AG04449 (cell line): ENCODE measurements at regions of chr15 and their contacts with region 1.

Region 1: GRCh38 chr15:100918034-100918689 is 995 bp upstream of the LRRK1 start:
- DNase-seq: no peak
- H3K4me3 ChIP-seq: peak overlapping the region; percentile 69
- CTCF ChIP-seq: peak; percentile 96

Region 2: DNA sequence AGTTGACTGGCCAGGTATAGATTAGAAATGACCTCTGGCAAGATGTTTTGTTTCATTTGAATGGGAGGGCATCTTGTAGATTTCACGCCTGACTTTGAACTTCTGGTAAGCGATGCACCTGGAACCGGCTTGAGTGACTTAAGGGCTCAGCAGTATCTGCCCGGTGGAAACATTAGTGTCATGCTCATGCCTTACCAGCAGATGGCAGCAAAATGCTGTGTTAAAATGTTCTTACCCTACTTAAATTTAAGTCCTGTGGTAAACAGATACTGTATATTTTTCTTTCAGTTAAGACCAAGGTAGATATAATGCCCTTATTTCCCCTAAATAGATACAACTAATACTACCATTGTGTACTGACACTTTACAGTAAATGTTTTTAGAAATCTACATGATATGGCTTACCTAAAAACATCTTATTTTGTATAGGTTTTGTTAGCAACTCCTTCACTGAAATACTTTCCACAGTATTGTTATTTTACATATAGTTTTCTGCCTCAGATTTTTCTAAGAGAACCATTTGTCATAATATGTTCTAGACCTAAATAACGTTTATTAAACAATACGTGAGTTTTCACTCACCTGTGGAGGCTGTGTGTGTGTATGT is 290.3 kb before region 1 on chr15:
- CTCF ChIA-PET with region 1: interaction called, 19 read pairs
- POLR2A ChIA-PET with region 1: no interaction called
- DNase-seq: peak; percentile 52
- H3K4me3 ChIP-seq: no peak overlapping the region
- CTCF ChIP-seq: peak; percentile 58

Region 3: DNA sequence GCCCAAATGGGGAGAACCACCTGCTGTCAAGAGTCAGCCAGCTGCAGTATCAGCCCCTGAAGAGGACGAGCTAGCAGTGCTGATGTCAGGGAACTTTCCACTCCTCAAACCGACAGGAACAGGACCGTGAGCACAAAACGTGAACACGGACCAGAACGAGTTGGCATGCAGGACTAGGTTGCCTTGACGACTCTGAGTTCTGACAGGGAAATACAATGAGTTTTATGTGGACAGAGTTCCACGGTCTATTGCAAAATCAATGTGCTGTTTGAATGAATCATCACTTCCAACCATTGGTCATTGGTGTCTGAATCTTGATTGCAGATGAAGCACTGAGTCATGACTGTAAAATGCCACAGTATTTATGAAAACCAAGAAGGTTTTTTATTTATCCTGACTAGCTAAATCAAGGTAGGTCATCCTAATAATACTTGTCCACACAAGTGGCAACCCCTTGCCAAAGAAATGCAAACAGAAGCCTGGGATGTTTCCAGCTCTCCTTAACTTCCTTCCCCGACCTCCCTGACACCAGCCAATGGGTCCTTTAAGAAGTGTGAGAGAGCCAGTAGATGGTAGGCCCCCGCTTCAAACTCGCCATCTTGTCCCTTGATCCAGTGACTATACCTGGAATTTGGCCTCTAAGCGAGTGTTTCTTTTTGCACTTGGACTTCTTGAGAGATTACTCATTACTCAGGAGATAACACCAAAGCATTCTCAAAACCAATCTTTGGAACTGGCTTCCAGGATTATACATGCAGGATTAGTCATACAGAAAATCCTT is 196.2 kb before region 1 on chr15:
- CTCF ChIA-PET with region 1: no interaction called
- POLR2A ChIA-PET with region 1: no interaction called
- DNase-seq: peak; percentile 97
- H3K4me3 ChIP-seq: peak overlapping the region; percentile 36
- CTCF ChIP-seq: no peak

Region 4: GRCh38 chr15:100873029-100873677 is 45.0 kb before region 1 on chr15:
- CTCF ChIA-PET with region 1: interaction called, 15 read pairs
- POLR2A ChIA-PET with region 1: no interaction called
- DNase-seq: peak; percentile 73
- H3K4me3 ChIP-seq: no peak overlapping the region
- CTCF ChIP-seq: peak; percentile 78

Region 5: GRCh38 chr15:100889385-100890050 is 28.6 kb before region 1 on chr15:
- CTCF ChIA-PET with region 1: interaction called, 12 read pairs
- POLR2A ChIA-PET with region 1: no interaction called
- DNase-seq: peak; percentile 52
- H3K4me3 ChIP-seq: peak overlapping the region; percentile 6
- CTCF ChIP-seq: no peak

Region 6: DNA sequence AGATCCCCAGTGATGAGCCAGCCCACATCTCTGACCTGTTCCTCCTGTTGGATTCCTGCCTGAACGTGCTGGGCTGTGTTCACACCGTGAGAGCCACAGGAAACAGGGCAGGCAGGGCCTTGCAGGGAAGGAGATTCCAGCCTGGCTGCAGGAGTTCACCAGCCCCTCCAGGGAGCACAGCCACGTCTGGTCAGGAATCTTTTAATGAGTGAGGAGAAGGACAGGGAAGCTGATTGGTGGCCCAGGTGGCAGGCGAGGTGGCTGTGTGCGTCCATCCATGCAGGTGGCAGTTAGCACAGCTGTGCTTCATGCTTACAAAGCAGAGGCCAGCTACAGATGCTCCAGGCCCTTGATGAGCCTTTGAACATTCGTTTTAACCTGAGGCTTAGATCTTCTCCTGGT is 11.5 kb after region 1 on chr15:
- CTCF ChIA-PET with region 1: interaction called, 76 read pairs
- POLR2A ChIA-PET with region 1: no interaction called
- DNase-seq: no peak
- H3K4me3 ChIP-seq: no peak overlapping the region
- CTCF ChIP-seq: no peak

Region 7: DNA sequence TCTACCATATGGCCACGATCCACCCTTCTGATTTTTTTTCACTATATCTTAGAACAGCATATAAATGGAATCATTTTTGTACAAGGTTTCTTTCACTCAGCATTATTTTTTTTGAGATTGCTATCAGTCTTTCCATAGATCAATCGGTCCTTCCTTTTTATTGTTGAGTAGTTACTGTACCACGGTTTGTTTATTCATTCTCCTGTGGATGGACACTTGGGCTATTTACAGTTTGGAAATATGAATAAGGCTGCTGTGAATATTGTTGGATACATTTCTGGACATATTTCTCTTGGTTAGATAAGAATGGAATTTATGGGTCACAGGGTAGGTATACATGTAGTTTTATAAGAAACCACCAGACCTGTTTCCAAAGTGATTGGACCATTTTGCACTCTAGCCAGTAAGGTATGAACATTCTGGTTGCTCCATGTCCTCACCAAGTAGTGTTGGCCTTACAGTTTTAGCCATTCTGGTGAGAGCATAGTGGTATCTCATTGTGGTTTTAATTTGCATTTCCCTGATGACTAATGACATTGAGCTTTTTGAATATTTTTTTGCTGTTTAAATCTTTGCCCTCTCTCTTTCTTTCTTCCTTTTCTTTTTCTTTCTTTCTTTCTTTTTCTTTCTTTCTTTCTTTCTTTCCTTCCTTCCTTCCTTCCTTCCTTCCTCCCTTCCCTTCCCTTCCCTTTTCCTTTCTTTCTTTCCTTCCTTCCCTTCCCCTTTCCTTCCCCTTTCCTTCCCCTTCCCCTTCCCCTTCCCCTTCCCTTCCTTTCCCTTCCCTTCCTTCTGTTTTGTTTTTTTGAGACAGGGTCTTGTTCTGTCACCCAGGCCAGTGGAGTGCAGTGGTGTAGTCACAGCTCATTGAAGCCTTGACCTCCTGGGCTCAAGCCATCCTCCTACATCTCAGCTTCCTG is 50.1 kb after region 1 on chr15:
- CTCF ChIA-PET with region 1: interaction called, 10 read pairs
- POLR2A ChIA-PET with region 1: no interaction called
- DNase-seq: no peak
- H3K4me3 ChIP-seq: no peak overlapping the region
- CTCF ChIP-seq: no peak

Region 8: GRCh38 chr15:101042320-101042719 is 124.2 kb after region 1 on chr15:
- CTCF ChIA-PET with region 1: no interaction called
- POLR2A ChIA-PET with region 1: no interaction called
- DNase-seq: no peak
- H3K4me3 ChIP-seq: no peak overlapping the region
- CTCF ChIP-seq: no peak

Region 9: DNA sequence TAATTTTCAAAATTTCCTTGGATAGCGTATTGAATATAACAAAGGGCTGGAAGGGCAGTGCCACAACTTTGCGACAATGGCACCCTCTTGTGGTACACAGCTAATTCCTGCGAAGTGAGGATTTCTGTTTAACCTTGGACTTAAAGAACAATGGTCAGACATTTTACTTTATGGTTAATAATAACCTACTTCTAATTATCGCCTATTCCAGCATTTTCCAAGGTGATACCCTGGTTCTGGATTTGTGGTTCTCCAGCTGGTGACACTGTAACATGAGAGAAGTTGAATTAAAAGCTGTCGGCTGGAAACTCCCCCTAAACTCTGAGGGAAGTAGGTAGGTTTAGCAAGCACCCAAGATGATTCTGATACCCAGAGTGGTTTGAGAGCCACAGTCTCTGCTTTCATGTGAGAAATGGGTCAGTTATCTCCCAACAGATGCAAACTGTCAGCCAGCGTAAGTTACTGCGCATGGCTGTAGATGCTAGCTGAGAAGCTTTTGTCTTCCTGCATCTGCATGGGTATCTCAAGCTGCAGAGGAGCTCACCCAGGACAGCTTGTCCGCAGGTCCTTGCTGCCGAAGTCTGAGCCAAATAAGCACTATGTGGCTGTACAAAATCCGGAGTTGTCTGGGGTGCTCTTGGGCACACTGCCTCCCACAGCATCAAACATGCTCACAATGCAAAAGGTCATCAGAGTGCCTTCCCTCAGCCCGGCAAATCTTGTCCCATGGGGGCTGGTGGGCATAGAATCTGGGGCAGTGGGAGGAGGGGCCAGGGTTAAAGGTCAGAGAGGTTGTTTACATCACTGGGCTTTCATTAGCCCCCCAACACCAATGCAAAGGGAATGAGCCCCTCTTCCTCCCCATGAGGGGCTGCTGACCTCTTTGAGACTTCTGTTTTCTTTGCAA is 340.3 kb after region 1 on chr15:
- CTCF ChIA-PET with region 1: interaction called, 12 read pairs
- POLR2A ChIA-PET with region 1: no interaction called
- DNase-seq: no peak
- H3K4me3 ChIP-seq: no peak overlapping the region
- CTCF ChIP-seq: peak; percentile 62